GM12878 (cell line): ENCODE measurements at regions of chr11 and their contacts with region 1.

Region 1: GRCh38 chr11:19326499-19326898 is 85.8 kb upstream of the E2F8 start:
- DNase-seq: no peak
- ATAC-seq: peak; percentile 36
- H3K4me3 ChIP-seq: no peak overlapping the region
- H3K27ac ChIP-seq: no peak overlapping the region
- H3K4me1 ChIP-seq: peaks cover 30% of the 10 kb centered on the region
- H3K27me3 ChIP-seq: no peaks in the 10 kb centered on the region
- CTCF ChIP-seq: peak in 2 of 3 experiments; percentile 13 to 30; a peak in 2 of 6 replicates
- EP300 ChIP-seq: no peak
- POLR2A ChIP-seq: no peak
- RAD21 ChIP-seq: peak; percentile 42; the same call in 1 of the 2 replicates

Region 2: DNA sequence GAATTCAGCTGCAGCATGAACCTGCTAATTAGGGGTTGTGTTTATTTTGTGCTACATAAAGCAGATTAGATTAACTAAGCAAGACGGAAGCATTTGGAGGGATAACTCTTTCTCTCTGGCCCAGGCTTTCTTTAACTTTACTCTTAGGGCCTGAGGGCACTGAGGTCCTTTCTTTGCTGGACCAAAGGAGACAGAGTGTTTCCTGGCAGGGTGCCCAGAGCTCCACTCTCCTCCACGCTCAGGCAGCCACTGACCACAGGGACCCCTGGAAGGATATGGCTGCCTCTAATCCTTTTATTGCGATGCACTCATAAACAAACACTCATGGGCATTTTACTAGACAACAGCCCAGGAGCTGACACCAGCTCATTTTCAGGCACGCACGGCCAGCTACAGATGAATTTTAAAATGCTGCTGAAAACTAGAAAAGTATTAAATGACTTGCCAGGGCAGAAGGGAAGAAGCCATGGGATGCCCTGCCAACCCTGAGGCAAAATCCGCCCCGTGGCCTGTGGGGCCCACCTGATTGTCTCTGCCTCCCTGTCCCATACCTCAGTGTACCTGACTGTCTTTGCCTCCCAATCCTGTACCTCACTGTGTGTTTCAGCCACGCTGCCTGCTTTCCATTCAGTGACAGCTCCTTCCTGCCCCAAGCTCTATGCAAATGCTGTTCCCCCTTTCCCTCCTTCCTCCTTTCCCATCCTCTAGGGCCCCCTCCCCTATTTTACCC is 193.6 kb after region 1 on chr11:
- CTCF ChIA-PET with region 1: interaction called, 10 read pairs
- POLR2A ChIA-PET with region 1: no interaction called
- RAD21 ChIA-PET with region 1: interaction called, 21 read pairs
- SMC1A ChIA-PET with region 1: interaction called, 11 read pairs
- in situ Hi-C with region 1: no loop called
- intact Hi-C with region 1: no loop called
- DNase-seq: no peak
- ATAC-seq: no peak
- H3K4me3 ChIP-seq: no peak overlapping the region
- H3K27ac ChIP-seq: no peak overlapping the region
- H3K4me1 ChIP-seq: peaks cover 2% of the 10 kb centered on the region
- H3K27me3 ChIP-seq: no peaks in the 10 kb centered on the region
- CTCF ChIP-seq: no peak
- EP300 ChIP-seq: no peak
- POLR2A ChIP-seq: no peak
- RAD21 ChIP-seq: no peak